Panc1 (cell line): ENCODE measurements at regions of chr19 and their contacts with region 1.

Region 1: DNA sequence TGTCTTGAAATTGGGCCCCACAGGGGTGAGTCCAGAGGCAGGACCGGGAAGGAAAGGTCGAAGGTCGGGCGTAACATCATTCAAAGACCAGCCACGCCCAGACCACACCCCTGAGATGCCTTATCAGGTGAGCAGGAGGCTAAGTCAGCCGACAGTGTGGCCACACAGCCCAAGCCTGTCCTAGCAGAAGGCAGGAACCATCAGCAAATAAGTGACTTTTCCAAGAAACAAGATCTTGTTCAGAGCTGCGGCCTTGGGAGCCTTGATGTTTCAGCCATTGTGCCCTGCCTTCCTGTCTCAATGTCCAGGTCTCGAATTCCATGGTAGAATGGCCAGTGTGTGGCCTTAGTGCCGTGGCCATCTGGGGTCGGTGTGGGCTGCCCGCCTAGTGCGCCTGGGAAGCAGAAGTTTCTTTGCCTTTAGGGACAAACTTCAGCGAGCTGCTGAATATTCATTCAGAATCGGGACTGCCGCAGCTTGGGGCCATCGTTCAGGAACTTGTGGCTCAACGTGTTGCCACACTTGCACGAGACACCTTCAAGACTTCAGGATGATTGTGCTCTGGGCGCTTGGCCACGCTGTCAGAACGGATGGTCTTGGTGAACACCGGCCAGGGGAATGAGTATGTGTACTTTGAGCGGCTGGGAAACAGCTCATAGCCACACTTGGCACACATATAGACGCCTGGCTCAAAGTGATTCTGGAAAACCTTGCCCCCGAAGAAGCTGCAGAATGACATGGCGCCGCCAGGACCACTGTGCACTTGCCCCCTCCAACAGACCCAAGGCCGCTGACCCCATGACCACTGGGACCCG is 6.1 kb upstream of the IFNL4 start:
- DNase-seq: no peak
- ATAC-seq: no peak
- H3K4me3 ChIP-seq: no peak overlapping the region
- H3K27ac ChIP-seq: no peak overlapping the region
- H3K4me1 ChIP-seq: no peaks in the 10 kb centered on the region
- H3K27me3 ChIP-seq: peaks cover 4% of the 10 kb centered on the region; the same call in 1 of the 2 replicates
- CTCF ChIP-seq: no peak

Region 2: DNA sequence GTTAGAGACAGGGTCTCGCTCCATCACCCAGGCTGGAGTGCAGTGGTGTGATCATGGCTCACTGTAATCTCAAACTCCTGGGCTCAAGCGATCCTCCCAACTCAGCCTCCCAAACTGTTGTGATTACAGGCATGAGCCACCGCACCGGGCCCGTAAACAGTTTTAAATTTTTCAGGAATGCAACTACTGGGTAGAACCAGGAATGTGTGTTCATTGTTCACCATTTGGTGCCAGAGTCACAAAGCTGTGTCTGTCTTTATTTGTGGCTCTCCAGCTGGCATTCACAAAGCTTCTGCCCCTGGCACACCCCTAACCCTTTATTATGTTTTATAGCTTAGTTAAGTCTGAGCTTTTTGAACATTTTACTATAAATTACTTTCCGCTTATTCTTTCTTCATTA is 190.3 kb before region 1 on chr19:
- CTCF ChIA-PET with region 1: interaction called, 4 read pairs
- POLR2A ChIA-PET with region 1: no interaction called
- in situ Hi-C with region 1: loop called (anchors 5 kb)
- intact Hi-C with region 1: no loop called
- DNase-seq: no peak
- ATAC-seq: peak; percentile 6; the same call in 1 of the 2 replicates
- H3K4me3 ChIP-seq: no peak overlapping the region
- H3K27ac ChIP-seq: peak overlapping the region; percentile 40
- H3K4me1 ChIP-seq: peaks cover 10% of the 10 kb centered on the region
- H3K27me3 ChIP-seq: no peaks in the 10 kb centered on the region
- CTCF ChIP-seq: no peak

Region 3: DNA sequence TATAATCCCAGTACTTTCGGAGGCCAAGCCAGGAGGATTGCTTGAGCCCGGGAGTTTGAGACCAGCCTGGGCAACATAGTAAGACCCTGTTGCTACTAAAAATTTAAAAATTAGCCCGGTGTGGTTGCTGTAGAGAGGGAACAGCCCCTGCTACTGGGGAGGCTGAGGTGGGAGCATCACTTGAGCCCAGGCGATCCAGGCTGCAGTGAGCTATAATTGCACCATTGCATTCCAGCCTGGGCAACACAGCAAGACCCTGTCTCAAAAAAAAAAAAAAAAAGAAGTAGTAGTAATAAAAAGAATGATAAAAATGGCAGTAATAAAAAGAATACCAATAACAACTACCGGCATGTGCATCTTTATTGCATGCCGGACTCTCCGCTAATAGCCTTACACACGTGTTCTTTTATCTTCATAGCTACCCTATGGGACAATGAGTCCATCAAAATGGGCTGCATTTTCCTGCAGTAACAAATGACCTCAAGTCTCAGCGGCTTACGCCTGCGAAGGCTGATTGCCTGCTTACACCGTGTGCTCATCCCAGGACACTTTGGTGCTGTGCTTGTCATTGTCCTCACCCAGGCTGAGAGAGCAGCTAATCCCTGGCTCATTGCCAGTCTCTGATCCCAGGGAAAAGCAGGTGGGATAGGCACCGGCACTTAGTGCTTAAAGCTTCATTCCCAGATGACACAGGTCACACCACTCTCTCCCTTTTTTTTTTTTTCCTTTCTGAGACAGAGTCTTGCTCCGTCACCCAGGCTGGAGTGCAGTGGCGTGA is 36.3 kb before region 1 on chr19:
- CTCF ChIA-PET with region 1: interaction called, 5 read pairs
- POLR2A ChIA-PET with region 1: interaction called, 3 read pairs
- in situ Hi-C with region 1: loop called (anchors 5 kb)
- intact Hi-C with region 1: no loop called
- DNase-seq: no peak
- ATAC-seq: 0 out of 2 replicates have a peak, but pooled peaks have one; percentile 8
- H3K4me3 ChIP-seq: no peak overlapping the region
- H3K27ac ChIP-seq: no peak overlapping the region
- H3K4me1 ChIP-seq: no peaks in the 10 kb centered on the region
- H3K27me3 ChIP-seq: peaks cover 10% of the 10 kb centered on the region
- CTCF ChIP-seq: no peak

Region 4: DNA sequence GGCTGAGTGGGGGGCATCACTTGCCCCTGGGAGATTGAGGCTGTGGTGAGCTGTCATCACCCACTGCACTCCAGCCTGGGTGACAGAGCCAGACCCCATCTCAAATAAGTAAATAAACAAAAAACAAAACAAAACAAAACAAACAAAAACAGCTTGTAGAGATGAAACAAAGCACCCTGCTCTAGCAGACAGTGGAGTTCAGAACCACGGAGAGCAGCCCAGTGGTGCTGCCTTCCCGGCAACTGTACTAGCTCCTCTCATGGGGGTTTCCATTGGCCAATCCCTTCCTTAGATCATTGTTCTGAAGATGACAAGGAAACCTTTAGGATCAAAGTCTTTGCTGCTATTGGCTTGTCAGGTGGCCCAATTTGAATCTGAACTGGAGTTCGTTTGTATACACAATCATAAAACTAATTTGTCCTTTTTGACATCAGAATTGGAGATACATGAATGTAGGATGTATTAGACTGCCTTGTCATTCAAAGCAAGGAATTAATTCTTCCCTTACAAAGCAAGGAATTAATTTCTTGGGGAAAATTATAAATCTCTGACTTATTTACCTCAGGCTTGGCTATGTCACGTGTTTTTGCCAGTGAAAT is 31.0 kb before region 1 on chr19:
- CTCF ChIA-PET with region 1: interaction called, 10 read pairs
- POLR2A ChIA-PET with region 1: interaction called, 3 read pairs
- in situ Hi-C with region 1: loop called (anchors 5 kb)
- intact Hi-C with region 1: no loop called
- DNase-seq: no peak
- ATAC-seq: peak; percentile 40; the same call in 1 of the 2 replicates
- H3K4me3 ChIP-seq: no peak overlapping the region
- H3K27ac ChIP-seq: no peak overlapping the region
- H3K4me1 ChIP-seq: no peaks in the 10 kb centered on the region
- H3K27me3 ChIP-seq: peaks cover 17% of the 10 kb centered on the region
- CTCF ChIP-seq: no peak

Region 5: GRCh38 chr19:39694247-39694646 is 439.5 kb after region 1 on chr19:
- CTCF ChIA-PET with region 1: no interaction called
- POLR2A ChIA-PET with region 1: interaction called, 10 read pairs
- in situ Hi-C with region 1: no loop called
- intact Hi-C with region 1: no loop called
- DNase-seq: no peak
- ATAC-seq: peak; percentile 14; the same call in 1 of the 2 replicates
- H3K4me3 ChIP-seq: no peak overlapping the region
- H3K27ac ChIP-seq: no peak overlapping the region
- H3K4me1 ChIP-seq: no peaks in the 10 kb centered on the region
- H3K27me3 ChIP-seq: peaks cover 96% of the 10 kb centered on the region
- CTCF ChIP-seq: no peak